Pancreas (tissue), 10 donors: ENCODE measurements at regions of chr9 and their contacts with region 1.

Region 1: DNA sequence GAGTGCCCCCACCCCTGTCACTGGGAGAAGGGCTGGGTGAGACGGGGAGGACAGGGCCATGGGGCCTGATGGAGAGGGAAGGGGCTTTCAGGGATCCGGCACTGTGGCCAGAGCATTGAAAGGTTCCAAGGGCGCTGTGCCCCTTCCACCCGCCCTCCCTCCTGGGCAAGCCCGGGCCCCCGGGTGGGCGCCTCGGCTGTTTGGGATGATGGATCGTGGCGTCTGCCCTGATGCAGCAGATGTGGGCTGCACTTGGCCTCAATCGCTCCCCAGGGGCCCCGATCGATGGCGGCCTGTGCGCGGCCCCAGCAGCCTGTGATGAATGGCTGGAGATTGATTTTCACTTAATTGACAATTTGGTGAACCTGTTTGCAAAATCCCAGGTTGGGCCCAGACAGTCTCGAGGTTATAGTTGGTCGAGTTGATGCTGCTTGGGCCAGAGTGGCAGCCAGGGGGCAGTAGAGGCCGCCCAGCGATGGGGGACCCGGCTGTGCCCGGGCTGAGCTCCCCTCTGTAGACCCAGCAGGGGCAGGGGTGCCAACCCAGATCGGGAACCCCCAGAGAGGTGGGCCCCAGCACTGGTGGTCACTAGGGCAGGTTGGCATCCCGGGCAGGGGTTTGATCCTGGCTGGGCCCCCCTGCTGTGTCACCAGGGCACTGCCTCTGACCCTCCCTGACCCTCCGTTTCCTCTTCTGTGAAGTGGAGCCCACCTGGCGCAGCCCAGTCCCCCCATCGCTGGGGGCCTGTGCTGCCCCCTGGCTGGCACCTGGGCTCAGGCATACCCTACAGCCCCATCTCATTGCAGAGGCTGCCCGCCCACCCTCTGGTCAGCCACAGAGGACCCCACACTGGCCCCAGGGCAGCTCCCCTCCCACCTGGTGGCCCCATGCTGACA is 34.7 kb downstream of the LHX3 start:
- DNase-seq: peak; percentile 28 to 86 (median 66)
- ATAC-seq: peak; percentile 75 to 93 (median 90)
- H3K4me3 ChIP-seq: no peak overlapping the region
- H3K27ac ChIP-seq: no peak overlapping the region
- H3K4me1 ChIP-seq: no peaks in the 10 kb centered on the region
- H3K27me3 ChIP-seq: no peaks in the 10 kb centered on the region
- CTCF ChIP-seq: peak; percentile 39 to 81 (median 76)

Region 2: GRCh38 chr9:136031741-136032730 is 138.2 kb before region 1 on chr9:
- intact Hi-C with region 1: no loop called
- DNase-seq: no peak
- ATAC-seq: no peak
- H3K4me3 ChIP-seq: no peak overlapping the region
- H3K27ac ChIP-seq: no peak overlapping the region
- H3K4me1 ChIP-seq: no peaks in the 10 kb centered on the region
- H3K27me3 ChIP-seq: no peaks in the 10 kb centered on the region
- CTCF ChIP-seq: no peak

Region 3: GRCh38 chr9:136079211-136079915 is 90.9 kb before region 1 on chr9:
- intact Hi-C with region 1: no loop called
- DNase-seq: peak in 3 of 6 donors; percentile 48 to 67 (median 51)
- ATAC-seq: peak in 2 of 4 donors; percentile 4 to 14
- H3K4me3 ChIP-seq: no peak overlapping the region
- H3K27ac ChIP-seq: peak overlapping the region in 2 of 4 donors; percentile 16 to 22
- H3K4me1 ChIP-seq: peaks cover 0 to 7% (median 6%) of the 10 kb centered on the region in 3 donors
- H3K27me3 ChIP-seq: no peaks in the 10 kb centered on the region
- CTCF ChIP-seq: no peak

Region 4: GRCh38 chr9:136275655-136276429 is 105.6 kb after region 1 on chr9:
- intact Hi-C with region 1: loop called in 2 of 3 experiments (anchors 10 kb)
- DNase-seq: peak in 1 of 6 donors; percentile 66
- ATAC-seq: peak in 1 of 4 donors; percentile 20
- H3K4me3 ChIP-seq: no peak overlapping the region
- H3K27ac ChIP-seq: no peak overlapping the region
- H3K4me1 ChIP-seq: no peaks in the 10 kb centered on the region
- H3K27me3 ChIP-seq: no peaks in the 10 kb centered on the region
- CTCF ChIP-seq: no peak

Region 5: DNA sequence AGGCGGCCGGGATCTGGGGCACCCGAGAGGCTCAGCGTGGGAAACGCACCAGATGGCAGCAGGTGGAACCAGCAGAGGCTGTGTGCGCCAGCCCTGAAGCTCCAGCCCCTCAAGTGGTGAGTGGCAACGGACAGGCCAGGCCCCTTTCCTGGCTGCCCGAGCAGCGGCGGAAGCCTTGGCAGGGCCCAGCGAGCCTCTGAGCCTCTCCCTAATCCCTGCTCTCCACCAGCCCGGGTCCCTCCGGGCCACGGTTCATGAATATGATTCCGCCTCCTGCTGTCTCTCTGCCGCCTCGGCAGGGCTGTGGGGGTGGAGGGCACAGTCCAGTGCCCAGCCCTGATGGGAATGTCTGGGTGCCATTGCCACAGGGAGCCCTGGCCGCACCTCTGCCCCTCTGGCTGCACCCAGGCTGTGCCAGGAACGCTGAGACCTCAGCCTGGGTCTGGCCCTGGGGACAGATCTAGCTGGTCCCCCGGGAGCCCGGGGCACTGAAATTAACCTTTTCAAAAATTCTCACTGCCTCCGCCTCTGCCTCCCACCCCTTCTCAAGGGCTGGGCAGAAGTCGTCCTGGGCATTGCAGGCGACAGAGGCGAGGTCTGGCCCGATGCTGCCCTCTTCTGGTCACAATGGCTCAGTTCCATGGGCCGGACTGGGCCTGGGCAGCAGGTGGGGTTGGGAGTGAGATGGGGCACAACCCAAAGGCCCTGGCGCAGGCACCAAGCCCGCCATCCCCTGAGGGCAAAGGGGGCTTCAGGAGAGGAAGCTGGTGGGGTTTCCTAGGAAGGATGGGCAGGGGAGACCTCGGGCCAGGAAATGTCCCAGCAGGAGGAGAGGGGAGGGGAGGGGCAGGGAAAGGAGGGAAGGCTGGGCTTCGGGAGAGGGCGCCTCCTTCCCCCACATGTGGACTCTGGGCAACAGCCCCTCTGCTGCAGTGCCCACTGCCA is 113.3 kb after region 1 on chr9:
- intact Hi-C with region 1: loop called in 2 of 3 experiments (anchors 10 kb)
- DNase-seq: peak; percentile 91 to 97 (median 96)
- ATAC-seq: peak; percentile 88 to 94 (median 90)
- H3K4me3 ChIP-seq: peak overlapping the region in 2 of 4 donors; percentile 22 to 24
- H3K27ac ChIP-seq: peak overlapping the region; percentile 72 to 88 (median 83)
- H3K4me1 ChIP-seq: peaks cover 10 to 12% (median 12%) of the 10 kb centered on the region in 3 donors
- H3K27me3 ChIP-seq: no peaks in the 10 kb centered on the region
- CTCF ChIP-seq: peak; percentile 75 to 85 (median 83)

Region 6: DNA sequence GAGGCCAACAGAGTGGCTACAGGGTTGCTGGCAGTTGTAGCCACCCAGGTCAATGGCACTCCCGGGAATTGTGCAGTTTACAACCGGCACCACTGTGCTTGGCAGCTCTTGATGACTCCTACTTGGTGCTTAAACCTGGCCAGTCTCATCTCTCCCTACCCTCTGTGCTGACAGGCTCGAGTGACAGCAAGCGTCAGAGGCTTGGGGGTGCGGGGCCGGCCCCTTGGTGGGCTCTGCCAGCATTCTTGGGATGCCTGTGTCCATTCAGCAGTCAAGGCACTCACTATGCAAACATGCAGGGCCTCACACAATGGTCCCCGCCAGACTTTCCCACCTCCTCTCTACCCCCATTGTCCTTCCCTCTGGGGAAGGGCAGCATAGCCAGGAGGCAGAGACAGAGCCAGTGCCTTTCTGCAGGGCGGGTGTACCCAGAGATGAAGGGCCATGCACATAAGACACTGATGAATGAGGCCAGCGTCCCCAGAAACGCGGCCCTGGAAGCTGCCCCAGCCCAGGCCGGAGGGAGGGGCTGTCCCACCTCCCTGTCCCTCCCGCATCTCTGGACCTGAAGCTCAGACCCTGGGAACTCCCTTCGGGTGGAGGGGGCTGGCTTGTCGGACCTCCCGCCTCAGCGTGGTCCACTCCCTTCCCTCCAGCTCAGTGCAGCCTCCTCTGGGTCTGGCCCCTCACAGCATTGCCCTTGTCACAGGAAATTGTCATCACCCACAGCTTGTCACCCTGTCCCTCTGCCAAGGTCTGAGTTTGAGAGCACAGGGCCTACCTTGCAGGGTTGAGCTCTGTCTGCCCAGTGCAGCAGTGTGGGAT is 402.0 kb after region 1 on chr9:
- intact Hi-C with region 1: no loop called
- DNase-seq: peak in 3 of 6 donors; percentile 52 to 67 (median 61)
- ATAC-seq: peak in 3 of 4 donors; percentile 23 to 38 (median 35)
- H3K4me3 ChIP-seq: no peak overlapping the region
- H3K27ac ChIP-seq: peak overlapping the region in 1 of 4 donors; percentile 3
- H3K4me1 ChIP-seq: peaks cover 0 to 3% (median 0%) of the 10 kb centered on the region in 3 donors
- H3K27me3 ChIP-seq: no peaks in the 10 kb centered on the region
- CTCF ChIP-seq: no peak